ENCODE measurements at regions of chr1 and their contacts with region 1.

Region 1: DNA sequence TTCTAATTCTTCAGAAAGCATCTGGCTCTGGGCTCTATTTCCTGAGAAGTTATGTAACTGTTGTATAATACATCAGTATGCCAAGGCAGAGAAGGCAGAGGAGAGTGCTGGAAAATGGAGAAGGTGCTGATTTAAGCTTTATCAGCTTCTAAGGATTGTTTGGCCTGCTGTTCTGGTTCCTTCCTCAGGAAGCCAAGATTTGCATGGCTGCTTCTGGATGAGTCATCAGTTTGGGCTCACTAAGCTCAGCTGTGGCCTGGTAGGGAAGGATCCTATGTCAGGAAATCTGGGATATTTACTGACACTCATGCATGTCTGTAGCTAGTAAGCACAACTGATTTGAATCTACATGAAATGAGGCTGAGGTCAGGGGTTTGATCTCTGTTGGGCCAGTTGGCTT is 73.2 kb upstream of the ADGRL4 start:
- DNase-seq: no peak
- H3K4me3 ChIP-seq: no peak overlapping the region
- H3K27ac ChIP-seq: no peak overlapping the region
- H3K4me1 ChIP-seq: no peaks in the 10 kb centered on the region
- H3K27me3 ChIP-seq: no peaks in the 10 kb centered on the region
- CTCF ChIP-seq: no peak
- EP300 ChIP-seq: no peak
- POLR2A ChIP-seq: no peak

Region 2: DNA sequence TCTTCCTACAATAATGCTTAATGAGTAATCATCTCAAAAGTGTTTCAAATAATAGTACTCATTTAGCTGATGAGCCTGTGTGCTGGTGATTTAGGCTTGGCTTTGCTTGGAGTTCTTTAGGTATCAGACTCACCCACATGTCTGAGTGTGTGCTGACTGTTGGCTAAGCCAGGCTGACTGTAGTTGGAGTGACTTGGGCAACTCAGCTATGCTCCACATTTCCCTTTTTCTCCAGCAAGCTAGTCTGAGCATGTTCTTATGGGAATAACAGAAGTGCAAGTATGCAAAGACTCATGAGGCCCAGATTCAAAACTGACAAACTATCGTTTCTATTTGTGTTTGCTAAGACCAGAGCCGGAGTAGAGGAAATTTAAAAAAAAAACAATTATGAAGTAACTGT is 25.7 kb after region 1 on chr1:
- in situ Hi-C with region 1: no loop called
- intact Hi-C with region 1: loop called (anchors 1 kb)
- DNase-seq: no peak
- H3K4me3 ChIP-seq: no peak overlapping the region
- H3K27ac ChIP-seq: no peak overlapping the region
- H3K4me1 ChIP-seq: no peaks in the 10 kb centered on the region
- H3K27me3 ChIP-seq: no peaks in the 10 kb centered on the region
- CTCF ChIP-seq: no peak
- EP300 ChIP-seq: no peak
- POLR2A ChIP-seq: no peak

Region 3: GRCh38 chr1:79295967-79296366 is 216.2 kb after region 1 on chr1:
- in situ Hi-C with region 1: no loop called
- intact Hi-C with region 1: no loop called
- DNase-seq: no peak
- H3K4me3 ChIP-seq: no peak overlapping the region
- H3K27ac ChIP-seq: no peak overlapping the region
- H3K4me1 ChIP-seq: no peaks in the 10 kb centered on the region
- H3K27me3 ChIP-seq: no peaks in the 10 kb centered on the region
- CTCF ChIP-seq: no peak
- EP300 ChIP-seq: no peak
- POLR2A ChIP-seq: no peak

Region 4: GRCh38 chr1:79657951-79658658 is 578.3 kb after region 1 on chr1:
- in situ Hi-C with region 1: no loop called
- intact Hi-C with region 1: no loop called
- DNase-seq: no peak
- H3K4me3 ChIP-seq: no peak overlapping the region
- H3K27ac ChIP-seq: no peak overlapping the region
- H3K4me1 ChIP-seq: no peaks in the 10 kb centered on the region
- H3K27me3 ChIP-seq: no peaks in the 10 kb centered on the region
- CTCF ChIP-seq: no peak
- EP300 ChIP-seq: no peak
- POLR2A ChIP-seq: no peak

Measured in transverse colon (tissue), 4 donors.